ENCODE measurements at regions of chr1 and their contacts with region 1.

Region 1: GRCh38 chr1:84143796-84144565 is at the start of gene PRKACB:
- DNase-seq: peak in 4 of 9 experiments; percentile 5 to 82 (median 36)
- ATAC-seq: peak; percentile 88
- H3K4me3 ChIP-seq: peak within 1 kb of the TSS; percentile 61 to 65
- H3K4me3 Mint-ChIP-seq: peak within 1 kb of the TSS; percentile 97
- H3K27ac ChIP-seq: peak within 1 kb of the TSS; percentile 59 to 82
- H3K27ac Mint-ChIP-seq: peak within 1 kb of the TSS; percentile 100
- H3K4me1 ChIP-seq: peaks cover 41% of the 10 kb centered on the region
- H3K4me1 Mint-ChIP-seq: peaks cover 45% of the 10 kb centered on the region
- H3K27me3 ChIP-seq: no peaks in the 10 kb centered on the region
- H3K27me3 Mint-ChIP-seq: no peaks in the 10 kb centered on the region
- CTCF ChIP-seq: no peak
- total RNA-seq, gene PRKACB: 50.9 to 55.8 TPM

Region 2: DNA sequence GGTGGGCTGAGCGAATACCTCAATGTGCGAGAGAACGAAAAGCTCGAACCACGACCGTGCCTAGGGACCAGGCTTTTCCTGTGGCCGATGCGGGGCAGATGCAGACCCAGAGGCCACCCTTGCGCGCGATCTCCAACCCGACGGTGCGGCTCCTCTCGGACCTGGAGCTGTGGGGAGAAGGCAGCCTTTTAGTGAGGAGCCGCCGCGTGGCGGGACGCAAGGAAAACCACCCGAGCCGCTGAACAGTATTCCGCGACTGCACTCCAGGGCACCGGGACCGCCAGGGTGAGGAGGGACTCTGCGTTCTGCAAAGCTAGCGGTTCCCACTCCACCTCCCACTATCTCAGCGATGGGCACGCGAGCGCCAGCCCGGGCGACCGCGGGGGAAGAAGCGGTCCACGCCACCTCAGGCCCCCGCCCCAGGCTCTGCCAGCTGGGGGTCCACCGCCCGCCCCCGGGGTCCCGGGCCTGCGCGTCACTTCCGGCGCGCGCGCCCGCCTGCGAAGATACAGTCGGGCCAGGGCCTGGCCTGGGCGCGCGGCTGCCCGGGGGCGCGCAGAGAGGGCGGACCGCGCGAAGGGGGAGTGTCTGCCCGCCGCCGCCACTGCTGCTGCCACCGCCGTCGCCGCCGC is 66.4 kb before region 1 on chr1:
- CTCF ChIA-PET with region 1: interaction called, 3 read pairs
- POLR2A ChIA-PET with region 1: interaction called, 9 read pairs
- intact Hi-C with region 1: loop called in 1 of 2 experiments (anchors 5 kb)
- DNase-seq: peak; percentile 48 to 88 (median 74)
- ATAC-seq: peak; percentile 89
- H3K4me3 ChIP-seq: peak overlapping the region; percentile 90 to 91
- H3K4me3 Mint-ChIP-seq: peak overlapping the region; percentile 87
- H3K27ac ChIP-seq: peak overlapping the region; percentile 72 to 76
- H3K27ac Mint-ChIP-seq: peak overlapping the region; percentile 86
- H3K4me1 ChIP-seq: peaks cover 14% of the 10 kb centered on the region
- H3K4me1 Mint-ChIP-seq: peaks cover 13% of the 10 kb centered on the region
- H3K27me3 ChIP-seq: no peaks in the 10 kb centered on the region
- H3K27me3 Mint-ChIP-seq: no peaks in the 10 kb centered on the region
- CTCF ChIP-seq: no peak

Region 3: GRCh38 chr1:84096176-84096575 is 47.8 kb before region 1 on chr1:
- CTCF ChIA-PET with region 1: no interaction called
- POLR2A ChIA-PET with region 1: no interaction called
- intact Hi-C with region 1: no loop called
- DNase-seq: no peak
- ATAC-seq: no peak
- H3K4me3 ChIP-seq: no peak overlapping the region
- H3K4me3 Mint-ChIP-seq: no peak overlapping the region
- H3K27ac ChIP-seq: no peak overlapping the region
- H3K27ac Mint-ChIP-seq: no peak overlapping the region
- H3K4me1 ChIP-seq: peaks cover 5% of the 10 kb centered on the region
- H3K4me1 Mint-ChIP-seq: peaks cover 14% of the 10 kb centered on the region
- H3K27me3 ChIP-seq: no peaks in the 10 kb centered on the region
- H3K27me3 Mint-ChIP-seq: no peaks in the 10 kb centered on the region
- CTCF ChIP-seq: no peak

Region 4: DNA sequence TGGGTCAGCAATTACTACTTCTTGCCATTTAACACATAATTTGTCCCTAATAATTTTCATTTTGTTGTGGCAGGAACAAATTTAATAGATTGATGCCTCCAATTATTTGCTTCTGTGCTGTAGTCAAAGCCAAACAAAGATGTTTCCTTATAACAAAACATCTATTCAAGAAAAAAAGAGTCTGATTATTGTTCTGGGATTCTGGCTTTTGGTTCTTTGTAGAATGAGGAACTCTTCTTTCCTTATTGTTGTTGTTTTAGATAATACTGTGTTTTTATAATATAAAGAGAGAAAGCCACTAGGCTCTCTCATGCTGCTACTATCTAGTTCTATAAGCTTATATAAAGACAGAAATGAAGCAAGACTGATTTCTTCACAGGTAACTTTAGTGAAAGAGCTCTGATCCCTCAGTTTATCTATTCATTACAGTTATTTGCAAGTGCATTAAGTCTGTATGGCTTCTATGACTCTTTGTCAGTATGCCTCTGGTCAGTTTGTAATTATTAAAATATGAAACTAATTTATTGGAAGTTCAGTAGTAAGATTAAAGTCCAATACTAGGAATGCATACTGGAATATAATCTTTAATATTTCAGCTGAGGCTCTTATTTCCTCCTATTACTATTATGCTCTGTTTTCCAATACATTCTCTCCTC is 37.5 kb after region 1 on chr1:
- CTCF ChIA-PET with region 1: no interaction called
- POLR2A ChIA-PET with region 1: interaction called, 5 read pairs
- intact Hi-C with region 1: loop called (anchors 5 kb)
- DNase-seq: no peak
- ATAC-seq: no peak
- H3K4me3 ChIP-seq: no peak overlapping the region
- H3K4me3 Mint-ChIP-seq: no peak overlapping the region
- H3K27ac ChIP-seq: no peak overlapping the region
- H3K27ac Mint-ChIP-seq: peak overlapping the region; percentile 20
- H3K4me1 ChIP-seq: peaks cover 7% of the 10 kb centered on the region
- H3K4me1 Mint-ChIP-seq: peaks cover 30% of the 10 kb centered on the region
- H3K27me3 ChIP-seq: no peaks in the 10 kb centered on the region
- H3K27me3 Mint-ChIP-seq: no peaks in the 10 kb centered on the region
- CTCF ChIP-seq: no peak

Region 5: GRCh38 chr1:84224905-84225304 is 80.9 kb after region 1 on chr1:
- CTCF ChIA-PET with region 1: no interaction called
- POLR2A ChIA-PET with region 1: no interaction called
- intact Hi-C with region 1: no loop called
- DNase-seq: no peak
- ATAC-seq: no peak
- H3K4me3 ChIP-seq: no peak overlapping the region
- H3K4me3 Mint-ChIP-seq: no peak overlapping the region
- H3K27ac ChIP-seq: no peak overlapping the region
- H3K27ac Mint-ChIP-seq: peak overlapping the region; percentile 41
- H3K4me1 ChIP-seq: no peaks in the 10 kb centered on the region
- H3K4me1 Mint-ChIP-seq: peaks cover 39% of the 10 kb centered on the region
- H3K27me3 ChIP-seq: no peaks in the 10 kb centered on the region
- H3K27me3 Mint-ChIP-seq: no peaks in the 10 kb centered on the region
- CTCF ChIP-seq: no peak

Region 6: GRCh38 chr1:84433258-84434080 is 289.5 kb after region 1 on chr1:
- CTCF ChIA-PET with region 1: interaction called, 144 read pairs
- POLR2A ChIA-PET with region 1: interaction called, 38 read pairs
- intact Hi-C with region 1: loop called (anchors 1 kb)
- DNase-seq: peak; percentile 31 to 92 (median 53)
- ATAC-seq: peak; percentile 73
- H3K4me3 ChIP-seq: peak overlapping the region; percentile 34 to 46
- H3K4me3 Mint-ChIP-seq: peak overlapping the region; percentile 76
- H3K27ac ChIP-seq: peak overlapping the region; percentile 73 to 76
- H3K27ac Mint-ChIP-seq: peak overlapping the region; percentile 75
- H3K4me1 ChIP-seq: peaks cover 49% of the 10 kb centered on the region
- H3K4me1 Mint-ChIP-seq: peaks cover 9% of the 10 kb centered on the region
- H3K27me3 ChIP-seq: no peaks in the 10 kb centered on the region
- H3K27me3 Mint-ChIP-seq: no peaks in the 10 kb centered on the region
- CTCF ChIP-seq: peak; percentile 65

Region 7: DNA sequence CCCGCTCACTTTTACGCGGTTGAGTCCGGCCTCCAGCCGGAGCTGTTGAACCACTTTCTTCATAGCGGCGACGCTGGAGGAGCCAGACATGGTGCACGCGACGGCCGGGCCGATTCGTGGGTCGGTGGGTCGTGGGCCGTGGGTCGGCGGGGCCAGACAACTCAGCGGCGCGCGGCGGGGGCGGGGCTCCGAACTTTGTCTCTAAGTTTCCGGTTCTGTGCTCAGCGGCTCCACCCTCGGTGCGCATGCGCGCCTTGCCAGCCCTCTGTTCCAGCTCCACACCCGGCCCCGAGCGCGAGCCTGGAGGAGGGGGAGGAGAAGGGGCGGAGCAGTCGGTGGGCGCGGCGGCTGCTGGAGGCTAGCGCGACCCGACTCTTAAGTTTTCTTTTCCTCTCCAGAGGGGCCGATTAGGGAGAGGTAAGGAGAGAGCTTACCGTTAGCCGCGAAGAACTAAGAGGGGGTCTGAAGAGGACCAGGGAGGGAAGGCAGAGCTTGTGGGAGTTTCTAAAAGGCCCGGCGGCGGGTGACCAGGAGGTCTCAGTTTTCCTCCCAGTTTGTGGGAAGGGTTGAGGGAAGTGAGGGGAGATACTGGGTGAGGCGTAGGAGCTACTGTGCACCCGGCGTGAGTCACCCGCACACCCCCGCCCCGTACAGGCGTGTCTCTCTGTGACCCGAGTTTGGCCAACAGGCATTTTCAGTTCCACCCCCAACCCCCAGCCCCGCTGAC is 362.2 kb after region 1 on chr1 and contains the starts of genes GNG5 and SPATA1:
- CTCF ChIA-PET with region 1: interaction called, 8 read pairs
- POLR2A ChIA-PET with region 1: interaction called, 12 read pairs
- intact Hi-C with region 1: loop called (anchors 1 to 10 kb)
- DNase-seq: peak; percentile 91 to 98 (median 98)
- ATAC-seq: peak; percentile 89
- H3K4me3 ChIP-seq: peak within 1 kb of the TSS; percentile 87 to 95
- H3K4me3 Mint-ChIP-seq: peak within 1 kb of the TSS; percentile 94
- H3K27ac ChIP-seq: peak within 1 kb of the TSS; percentile 75 to 88
- H3K27ac Mint-ChIP-seq: peak within 1 kb of the TSS; percentile 96
- H3K4me1 ChIP-seq: peaks cover 40% of the 10 kb centered on the region
- H3K4me1 Mint-ChIP-seq: peaks cover 45% of the 10 kb centered on the region
- H3K27me3 ChIP-seq: no peaks in the 10 kb centered on the region
- H3K27me3 Mint-ChIP-seq: no peaks in the 10 kb centered on the region
- CTCF ChIP-seq: no peak
- total RNA-seq, gene GNG5: 19.5 TPM
- total RNA-seq, gene SPATA1: 0.52 to 0.94 TPM

Region 8: GRCh38 chr1:84620720-84621313 is 476.8 kb after region 1 on chr1:
- CTCF ChIA-PET with region 1: interaction called, 15 read pairs
- POLR2A ChIA-PET with region 1: interaction called, 5 read pairs
- intact Hi-C with region 1: loop called (anchors 1 kb)
- DNase-seq: peak; percentile 63 to 91 (median 77)
- ATAC-seq: peak; percentile 91
- H3K4me3 ChIP-seq: peak overlapping the region; percentile 62 to 93
- H3K4me3 Mint-ChIP-seq: peak overlapping the region; percentile 91
- H3K27ac ChIP-seq: peak overlapping the region in 1 of 2 experiments; percentile 35
- H3K27ac Mint-ChIP-seq: peak overlapping the region; percentile 14
- H3K4me1 ChIP-seq: peaks cover 4% of the 10 kb centered on the region
- H3K4me1 Mint-ChIP-seq: peaks cover 2% of the 10 kb centered on the region
- H3K27me3 ChIP-seq: no peaks in the 10 kb centered on the region
- H3K27me3 Mint-ChIP-seq: peaks cover 5% of the 10 kb centered on the region
- CTCF ChIP-seq: peak; percentile 100

Region 9: GRCh38 chr1:84936116-84936810 is 792.3 kb after region 1 on chr1:
- CTCF ChIA-PET with region 1: interaction called, 5 read pairs
- POLR2A ChIA-PET with region 1: no interaction called
- intact Hi-C with region 1: loop called (anchors 1 to 2 kb)
- DNase-seq: peak in 7 of 9 experiments; percentile 10 to 79 (median 35)
- ATAC-seq: peak; percentile 73
- H3K4me3 ChIP-seq: no peak overlapping the region
- H3K4me3 Mint-ChIP-seq: no peak overlapping the region
- H3K27ac ChIP-seq: no peak overlapping the region
- H3K27ac Mint-ChIP-seq: no peak overlapping the region
- H3K4me1 ChIP-seq: peaks cover 5% of the 10 kb centered on the region
- H3K4me1 Mint-ChIP-seq: peaks cover 4% of the 10 kb centered on the region
- H3K27me3 ChIP-seq: no peaks in the 10 kb centered on the region
- H3K27me3 Mint-ChIP-seq: no peaks in the 10 kb centered on the region
- CTCF ChIP-seq: peak; percentile 98